Aorta (tissue), 5 donors: ENCODE measurements at regions of chrX and their contacts with region 1.

Region 1: DNA sequence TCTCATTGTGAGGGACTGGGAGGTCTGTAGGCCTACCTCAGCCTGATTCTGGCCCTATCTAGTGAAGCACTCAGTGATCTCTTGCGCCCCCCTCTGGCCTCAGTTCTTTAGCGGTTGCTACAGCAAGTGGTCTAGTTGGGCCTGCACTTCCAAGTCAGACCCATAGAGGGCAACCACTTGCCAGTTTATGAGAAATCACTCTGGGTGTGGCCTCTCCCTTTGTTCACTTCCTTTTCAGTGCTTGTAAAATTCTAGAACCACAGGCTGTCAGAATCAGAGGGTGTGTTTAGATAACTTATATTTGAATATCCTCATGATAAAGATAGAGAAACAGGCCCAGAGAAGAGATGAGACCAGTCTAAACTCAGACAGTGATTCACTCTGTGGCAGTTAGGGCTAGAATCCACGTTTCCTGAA is 60.9 kb upstream of the LAS1L start:
- DNase-seq: peak; percentile 97 to 98
- ATAC-seq: peak; percentile 95
- H3K4me3 ChIP-seq: no peak overlapping the region
- H3K27ac ChIP-seq: peak overlapping the region in 1 of 2 donors; percentile 10
- H3K4me1 ChIP-seq: peaks cover 0 to 3% of the 10 kb centered on the region in 2 donors
- H3K27me3 ChIP-seq: no peaks in the 10 kb centered on the region

Region 2: GRCh38 chrX:65551489-65552339 is 43.8 kb before region 1 on chrX:
- intact Hi-C with region 1: no loop called
- DNase-seq: no peak
- ATAC-seq: no peak
- H3K4me3 ChIP-seq: no peak overlapping the region
- H3K27ac ChIP-seq: no peak overlapping the region
- H3K4me1 ChIP-seq: no peaks in the 10 kb centered on the region
- H3K27me3 ChIP-seq: no peaks in the 10 kb centered on the region

Region 3: GRCh38 chrX:65667503-65668376 is 72.3 kb after region 1 on chrX and contains the start of gene MSN:
- intact Hi-C with region 1: loop called (anchors 2 to 5 kb)
- DNase-seq: peak; percentile 86 to 94
- ATAC-seq: peak; percentile 92
- H3K4me3 ChIP-seq: peak within 1 kb of the TSS; percentile 66 to 70
- H3K27ac ChIP-seq: peak within 1 kb of the TSS; percentile 17 to 87
- H3K4me1 ChIP-seq: no peaks in the 10 kb centered on the region
- H3K27me3 ChIP-seq: no peaks in the 10 kb centered on the region
- total RNA-seq, gene MSN: 374 to 532 TPM

Region 4: GRCh38 chrX:65706041-65706828 is 110.8 kb after region 1 on chrX:
- intact Hi-C with region 1: loop called (anchors 5 kb)
- DNase-seq: peak; percentile 59 to 84
- ATAC-seq: peak; percentile 57
- H3K4me3 ChIP-seq: no peak overlapping the region
- H3K27ac ChIP-seq: peak overlapping the region in 1 of 2 donors; percentile 89
- H3K4me1 ChIP-seq: peaks cover 2 to 4% of the 10 kb centered on the region in 2 donors
- H3K27me3 ChIP-seq: no peaks in the 10 kb centered on the region

Region 5: DNA sequence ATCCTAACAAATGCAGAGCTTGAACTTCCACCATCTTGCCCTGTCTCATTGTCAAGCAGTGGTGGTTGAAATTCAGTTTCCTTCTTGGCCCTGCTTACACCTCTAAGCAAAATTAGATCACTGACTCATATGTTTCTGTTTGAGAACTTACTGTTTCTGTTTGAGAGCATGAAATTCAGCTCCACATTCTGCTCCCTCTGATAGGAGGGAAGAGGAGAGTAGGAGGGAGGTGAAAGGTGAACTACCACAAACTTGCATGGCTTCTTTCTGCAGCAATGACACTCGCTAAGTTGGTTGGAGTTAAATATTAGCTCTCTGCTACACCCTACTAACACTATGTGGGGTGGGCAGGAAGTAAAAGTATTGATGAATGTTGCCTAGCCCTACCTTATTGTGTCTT is 1161.2 kb after region 1 on chrX:
- intact Hi-C with region 1: loop called in 1 of 2 experiments (anchors 10 kb)
- DNase-seq: no peak
- ATAC-seq: no peak
- H3K4me3 ChIP-seq: no peak overlapping the region
- H3K27ac ChIP-seq: no peak overlapping the region
- H3K4me1 ChIP-seq: no peaks in the 10 kb centered on the region
- H3K27me3 ChIP-seq: no peaks in the 10 kb centered on the region